HepG2 (cell line): ENCODE measurements at regions of chr16 and their contacts with region 1.

Region 1: GRCh38 chr16:29926005-29926710 is at the start of gene KCTD13:
- DNase-seq: peak; percentile 82
- ATAC-seq: peak; percentile 96
- H3K4me3 ChIP-seq: peak within 1 kb of the TSS; percentile 80 to 96 (median 87)
- H3K27ac ChIP-seq: peak within 1 kb of the TSS; percentile 77
- H3K4me1 ChIP-seq: peaks cover 31% of the 10 kb centered on the region
- H3K27me3 ChIP-seq: no peaks in the 10 kb centered on the region
- CTCF ChIP-seq: no peak; the same call in 1 of the 2 replicates
- EP300 ChIP-seq: no peak
- POLR2A ChIP-seq: peak; percentile 79 to 99
- RAD21 ChIP-seq: peak; percentile 55
- total RNA-seq, gene KCTD13: 3.9 and 6.3 TPM in 2 replicates

Region 2: GRCh38 chr16:29909391-29909790 is 16.8 kb before region 1 on chr16:
- CTCF ChIA-PET with region 1: no interaction called
- POLR2A ChIA-PET with region 1: interaction called, 34 read pairs
- in situ Hi-C with region 1: no loop called
- intact Hi-C with region 1: no loop called
- DNase-seq: no peak
- ATAC-seq: no peak
- H3K4me3 ChIP-seq: no peak overlapping the region
- H3K27ac ChIP-seq: no peak overlapping the region
- H3K4me1 ChIP-seq: peaks cover 5% of the 10 kb centered on the region; the same call in 1 of the 2 replicates
- H3K27me3 ChIP-seq: no peaks in the 10 kb centered on the region
- CTCF ChIP-seq: no peak
- EP300 ChIP-seq: no peak
- POLR2A ChIP-seq: no peak
- RAD21 ChIP-seq: no peak

Region 3: GRCh38 chr16:29943846-29944669 is 17.9 kb after region 1 on chr16:
- CTCF ChIA-PET with region 1: no interaction called
- POLR2A ChIA-PET with region 1: interaction called, 59 read pairs
- in situ Hi-C with region 1: no loop called
- intact Hi-C with region 1: no loop called
- DNase-seq: peak; percentile 91
- ATAC-seq: peak; percentile 97
- H3K4me3 ChIP-seq: peak overlapping the region; percentile 39 to 51 (median 41)
- H3K27ac ChIP-seq: peak overlapping the region; percentile 62
- H3K4me1 ChIP-seq: peaks cover 38% of the 10 kb centered on the region
- H3K27me3 ChIP-seq: no peaks in the 10 kb centered on the region
- CTCF ChIP-seq: peak; percentile 41; the same call in 1 of the 2 replicates
- EP300 ChIP-seq: peak in 1 of 2 experiments; percentile 29; a peak in 2 of 4 replicates
- POLR2A ChIP-seq: peak; percentile 22 to 50; a peak in 2 of 4 replicates
- RAD21 ChIP-seq: no peak

Region 4: GRCh38 chr16:29973384-29974246 is 47.5 kb after region 1 on chr16 and contains the start of gene TAOK2:
- CTCF ChIA-PET with region 1: no interaction called
- POLR2A ChIA-PET with region 1: interaction called, 42 read pairs
- in situ Hi-C with region 1: no loop called
- intact Hi-C with region 1: loop called (anchors 1 kb)
- DNase-seq: peak; percentile 98
- ATAC-seq: peak; percentile 95
- H3K4me3 ChIP-seq: peak within 1 kb of the TSS; percentile 86 to 99 (median 91)
- H3K27ac ChIP-seq: peak within 1 kb of the TSS; percentile 72
- H3K4me1 ChIP-seq: peaks cover 30% of the 10 kb centered on the region
- H3K27me3 ChIP-seq: no peaks in the 10 kb centered on the region; a peak in 1 of 5 replicates
- CTCF ChIP-seq: peak; percentile 11; the same call in 1 of the 2 replicates
- EP300 ChIP-seq: peak in 1 of 2 experiments; percentile 65; a peak in 2 of 4 replicates
- POLR2A ChIP-seq: peak; percentile 72 to 89
- RAD21 ChIP-seq: peak; percentile 5
- total RNA-seq, gene TAOK2: 27.6 and 43.2 TPM in 2 replicates

Region 5: DNA sequence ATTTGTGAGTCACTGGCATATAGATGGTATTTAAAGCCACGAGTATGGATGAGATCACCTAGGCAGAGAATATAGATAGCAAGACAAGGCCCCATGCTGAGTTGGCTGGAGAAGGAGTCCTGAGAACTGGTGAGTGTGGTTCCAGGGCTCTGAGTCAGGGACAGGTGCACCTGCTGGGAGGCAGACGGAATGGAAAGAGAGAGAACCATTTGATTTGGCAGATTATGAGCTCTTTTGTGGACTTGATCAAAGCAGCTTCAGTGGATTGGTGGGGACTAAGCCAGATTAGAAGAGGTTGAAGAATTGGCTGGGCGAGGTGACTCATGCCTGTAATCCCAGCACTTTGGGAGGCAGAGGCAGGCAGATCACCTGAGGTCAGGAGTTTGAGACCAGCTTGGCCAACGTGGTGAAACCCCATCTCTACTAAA is 92.6 kb after region 1 on chr16:
- CTCF ChIA-PET with region 1: no interaction called
- POLR2A ChIA-PET with region 1: no interaction called
- in situ Hi-C with region 1: no loop called
- intact Hi-C with region 1: loop called (anchors 1 kb)
- DNase-seq: no peak
- ATAC-seq: no peak
- H3K4me3 ChIP-seq: no peak overlapping the region
- H3K27ac ChIP-seq: no peak overlapping the region
- H3K4me1 ChIP-seq: peaks cover 22% of the 10 kb centered on the region
- H3K27me3 ChIP-seq: peaks cover 6 to 27% of the 10 kb centered on the region in 2 experiments
- CTCF ChIP-seq: no peak
- EP300 ChIP-seq: no peak
- POLR2A ChIP-seq: no peak
- RAD21 ChIP-seq: no peak